Esophagus muscularis mucosa (tissue), 4 donors: ENCODE measurements at regions of chr4 and their contacts with region 1.

Region 1: DNA sequence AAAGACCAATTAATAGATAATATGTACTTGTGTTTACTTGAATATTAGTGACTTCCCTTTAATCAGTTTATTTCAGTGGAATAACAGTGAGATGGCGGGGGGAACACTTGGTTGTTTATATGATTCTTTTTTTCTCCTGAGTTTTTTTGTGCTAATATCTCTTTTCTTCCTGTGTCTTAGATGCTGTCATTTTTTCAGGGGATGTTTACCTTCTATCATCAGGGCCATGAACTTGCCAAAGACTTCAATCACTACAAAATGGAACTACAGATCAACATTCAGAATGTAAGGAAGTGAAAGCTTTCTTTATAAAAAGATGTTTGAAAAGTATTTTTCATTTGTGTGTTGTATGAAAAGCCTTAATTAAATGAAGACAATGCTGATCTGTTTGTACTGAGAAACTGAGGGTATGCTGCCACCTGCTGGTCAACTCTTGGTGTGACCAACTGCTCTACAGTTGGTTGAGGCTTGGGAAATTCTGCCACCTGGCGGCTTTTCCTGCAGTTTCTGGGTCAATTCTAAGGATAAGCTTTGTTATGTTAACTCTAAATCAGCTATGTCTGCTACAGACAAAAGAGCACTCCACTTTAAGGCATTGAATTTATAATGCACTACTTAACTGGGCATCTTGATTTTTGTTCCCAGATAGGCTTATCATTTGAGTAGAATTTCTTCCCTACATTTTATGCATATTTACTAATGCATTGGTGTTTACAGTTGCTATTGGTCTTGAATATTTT is 134.8 kb downstream of the ARHGAP10 start:
- DNase-seq: peak; percentile 97
- H3K4me3 ChIP-seq: no peak overlapping the region
- H3K27ac ChIP-seq: peak overlapping the region; percentile 77 to 81 (median 79)
- H3K4me1 ChIP-seq: peaks cover 43 to 58% (median 51%) of the 10 kb centered on the region in 4 donors
- H3K27me3 ChIP-seq: no peaks in the 10 kb centered on the region
- CTCF ChIP-seq: peak; percentile 97 to 100 (median 99)
- EP300 ChIP-seq: no peak
- POLR2A ChIP-seq: no peak

Region 2: GRCh38 chr4:147707865-147708672 is 158.6 kb before region 1 on chr4:
- intact Hi-C with region 1: loop called (anchors 2 kb)
- DNase-seq: no peak
- H3K4me3 ChIP-seq: peak overlapping the region in 1 of 4 donors; percentile 13
- H3K27ac ChIP-seq: no peak overlapping the region
- H3K4me1 ChIP-seq: peaks cover 0 to 12% (median 9%) of the 10 kb centered on the region in 4 donors
- H3K27me3 ChIP-seq: no peaks in the 10 kb centered on the region
- CTCF ChIP-seq: peak; percentile 85 to 89 (median 86)
- EP300 ChIP-seq: no peak
- POLR2A ChIP-seq: no peak

Region 3: GRCh38 chr4:147731580-147732517 is 134.9 kb before region 1 on chr4 and contains the start of gene ARHGAP10:
- intact Hi-C with region 1: loop called (anchors 5 kb)
- DNase-seq: peak; percentile 94
- H3K4me3 ChIP-seq: peak within 1 kb of the TSS; percentile 79 to 98 (median 90)
- H3K27ac ChIP-seq: peak within 1 kb of the TSS; percentile 93 to 98 (median 96)
- H3K4me1 ChIP-seq: peaks cover 3 to 32% (median 31%) of the 10 kb centered on the region in 4 donors
- H3K27me3 ChIP-seq: no peaks in the 10 kb centered on the region
- CTCF ChIP-seq: no peak
- EP300 ChIP-seq: no peak
- POLR2A ChIP-seq: peak; percentile 40
- total RNA-seq, gene ARHGAP10: 186 to 296 (median 192) TPM